ENCODE measurements at regions of chr18 and their contacts with region 1.

Region 1: DNA sequence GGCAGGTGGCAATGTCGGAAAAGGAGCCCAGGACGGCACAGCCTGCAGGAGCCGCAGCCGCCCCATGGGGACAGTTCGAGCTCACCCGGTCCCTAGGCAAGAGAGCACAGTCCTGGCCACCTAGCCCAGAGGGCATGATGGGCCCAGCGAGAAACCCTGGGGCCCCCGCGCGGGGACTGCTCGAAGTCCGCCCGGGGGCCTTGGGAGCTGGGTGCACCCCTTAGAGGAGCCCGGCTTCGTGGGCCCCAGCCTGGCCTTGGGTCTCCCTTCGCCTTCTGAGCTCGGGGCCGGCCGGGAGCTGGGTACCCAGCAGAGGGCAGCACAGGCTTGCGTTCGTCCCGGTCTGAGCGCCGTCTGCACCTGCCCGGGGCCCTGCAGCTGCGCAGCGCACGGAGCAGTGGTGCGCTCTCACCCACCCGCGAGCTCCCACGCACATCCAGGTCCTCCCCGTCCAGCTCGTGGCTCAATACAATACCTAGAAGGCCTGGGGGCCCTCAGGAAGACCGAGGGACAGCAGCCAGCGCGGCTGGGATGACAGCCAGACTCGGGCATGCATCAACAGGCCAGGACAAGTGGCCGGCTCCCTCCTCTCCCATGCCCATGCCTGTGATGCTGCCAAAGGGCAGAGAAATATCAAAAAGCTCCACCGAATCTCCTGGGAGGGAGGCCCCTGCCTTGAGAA is 96.2 kb upstream of the ZNF532 start:
- DNase-seq: peak; percentile 77
- ATAC-seq: peak; percentile 96
- H3K4me3 Mint-ChIP-seq: no peak overlapping the region
- H3K27ac Mint-ChIP-seq: no peak overlapping the region
- H3K4me1 Mint-ChIP-seq: peaks cover 13% of the 10 kb centered on the region
- H3K27me3 Mint-ChIP-seq: peaks cover 44% of the 10 kb centered on the region

Region 2: DNA sequence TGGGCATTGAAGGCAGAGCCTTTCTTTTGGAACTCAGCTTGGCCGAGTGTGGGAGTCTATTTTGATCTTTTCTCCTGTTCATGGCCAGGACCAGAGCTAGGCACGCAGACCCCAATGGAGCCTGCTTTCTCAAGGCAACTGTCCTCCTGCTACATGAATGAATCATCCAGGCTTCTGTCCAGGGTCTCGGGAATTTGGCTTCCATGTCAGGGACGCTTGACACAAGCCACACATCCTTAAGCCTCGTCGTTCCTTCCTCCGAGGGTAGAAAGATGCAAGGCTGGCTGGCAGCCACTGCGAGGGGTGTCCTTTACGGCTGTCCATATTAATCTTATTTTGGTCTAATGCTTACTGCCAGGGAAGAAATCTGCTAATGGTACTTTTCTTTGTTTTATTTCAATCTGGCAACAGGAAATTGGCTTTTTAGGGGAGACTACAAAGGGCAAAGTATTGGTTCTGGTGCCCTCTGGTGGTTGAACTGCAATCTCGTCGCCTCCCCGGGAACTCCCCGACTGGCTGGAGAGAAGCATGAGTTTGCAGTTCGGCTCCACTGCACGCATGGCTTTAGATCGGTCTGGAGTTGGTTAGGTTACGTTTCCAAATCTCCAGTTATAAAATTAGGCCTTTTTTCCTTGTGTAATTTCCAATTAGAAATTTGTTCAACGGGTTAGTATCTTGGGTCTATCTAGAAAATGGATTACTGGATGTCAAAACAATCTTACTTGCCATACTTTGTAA is 274.7 kb before region 1 on chr18:
- CTCF ChIA-PET with region 1: interaction called, 25 read pairs
- POLR2A ChIA-PET with region 1: no interaction called
- DNase-seq: peak; percentile 81
- ATAC-seq: peak; percentile 92
- H3K4me3 Mint-ChIP-seq: no peak overlapping the region
- H3K27ac Mint-ChIP-seq: no peak overlapping the region
- H3K4me1 Mint-ChIP-seq: peaks cover 9% of the 10 kb centered on the region
- H3K27me3 Mint-ChIP-seq: peaks cover 36% of the 10 kb centered on the region

Region 3: DNA sequence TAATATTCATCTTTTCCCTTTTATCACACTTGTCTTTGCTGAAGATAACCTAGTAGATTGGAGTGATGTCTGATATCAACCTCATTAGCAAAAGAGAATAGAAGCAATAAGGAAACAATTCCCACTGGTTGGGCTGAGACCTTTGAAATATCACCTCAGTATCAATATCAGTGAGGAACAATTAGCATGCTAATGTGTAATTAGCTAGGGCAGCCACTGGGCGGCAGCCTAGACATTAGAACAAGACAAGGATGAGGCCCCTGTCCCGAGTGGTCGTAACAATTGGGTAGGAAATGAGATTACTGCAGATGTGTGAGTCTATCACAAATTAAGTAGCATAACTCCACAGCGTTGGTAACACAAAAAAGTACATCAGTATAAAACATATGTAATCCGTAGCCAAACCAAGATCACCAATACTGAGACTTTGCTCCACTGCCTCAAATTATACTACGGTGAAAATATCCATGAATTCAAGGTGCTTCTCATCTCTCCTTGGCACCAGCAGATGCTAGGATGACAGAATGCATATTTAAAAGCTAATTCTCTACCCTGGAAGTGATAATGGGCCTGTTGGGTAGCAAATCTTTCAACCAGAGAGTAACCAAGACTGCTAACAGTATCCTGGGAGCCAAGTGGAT is 238.6 kb before region 1 on chr18:
- CTCF ChIA-PET with region 1: interaction called, 415 read pairs
- POLR2A ChIA-PET with region 1: interaction called, 5 read pairs
- DNase-seq: peak; percentile 76
- ATAC-seq: no peak
- H3K4me3 Mint-ChIP-seq: no peak overlapping the region
- H3K27ac Mint-ChIP-seq: no peak overlapping the region
- H3K4me1 Mint-ChIP-seq: peaks cover 10% of the 10 kb centered on the region
- H3K27me3 Mint-ChIP-seq: peaks cover 21% of the 10 kb centered on the region

Region 4: GRCh38 chr18:58657494-58657893 is 110.9 kb before region 1 on chr18:
- CTCF ChIA-PET with region 1: interaction called, 12 read pairs
- POLR2A ChIA-PET with region 1: interaction called, 3 read pairs
- DNase-seq: no peak
- ATAC-seq: no peak
- H3K4me3 Mint-ChIP-seq: peak overlapping the region; percentile 70
- H3K27ac Mint-ChIP-seq: peak overlapping the region; percentile 96
- H3K4me1 Mint-ChIP-seq: peaks cover 67% of the 10 kb centered on the region
- H3K27me3 Mint-ChIP-seq: no peaks in the 10 kb centered on the region

Region 5: DNA sequence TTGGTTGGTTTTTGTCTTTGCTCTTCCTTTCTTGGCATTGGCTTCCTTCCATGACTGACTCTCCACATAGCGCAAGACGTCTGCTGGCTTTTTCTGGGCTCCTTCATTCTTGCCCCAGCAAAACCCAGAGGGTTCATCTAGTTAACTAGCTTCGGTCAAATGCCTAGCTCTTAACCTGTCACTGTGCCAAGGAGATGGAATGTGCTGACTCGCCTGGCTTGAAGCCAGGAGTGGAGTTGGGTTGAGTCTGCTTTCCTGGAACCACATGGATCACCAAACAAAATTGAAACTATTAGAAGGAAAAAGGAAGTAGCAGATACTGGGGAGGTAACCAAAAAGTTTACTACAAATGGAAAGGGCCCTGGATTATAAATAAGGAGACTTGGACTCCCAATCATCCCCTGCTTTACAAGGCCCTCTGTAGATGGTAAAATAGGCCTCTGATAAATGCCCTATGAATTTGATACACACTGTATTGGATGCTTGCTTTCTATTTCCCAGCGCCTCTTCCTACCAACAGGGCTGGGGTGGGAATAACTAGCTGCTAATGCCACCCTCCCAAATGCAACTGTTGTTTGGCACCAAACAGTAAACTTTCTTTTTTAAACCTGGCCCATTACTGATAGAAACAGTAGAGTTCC is 85.9 kb before region 1 on chr18:
- CTCF ChIA-PET with region 1: interaction called, 16 read pairs
- POLR2A ChIA-PET with region 1: no interaction called
- DNase-seq: no peak
- ATAC-seq: no peak
- H3K4me3 Mint-ChIP-seq: no peak overlapping the region
- H3K27ac Mint-ChIP-seq: no peak overlapping the region
- H3K4me1 Mint-ChIP-seq: peaks cover 40% of the 10 kb centered on the region
- H3K27me3 Mint-ChIP-seq: no peaks in the 10 kb centered on the region

Region 6: GRCh38 chr18:58748899-58749595 is 19.4 kb before region 1 on chr18:
- CTCF ChIA-PET with region 1: interaction called, 49 read pairs
- POLR2A ChIA-PET with region 1: no interaction called
- DNase-seq: no peak
- ATAC-seq: no peak
- H3K4me3 Mint-ChIP-seq: no peak overlapping the region
- H3K27ac Mint-ChIP-seq: no peak overlapping the region
- H3K4me1 Mint-ChIP-seq: peaks cover 10% of the 10 kb centered on the region
- H3K27me3 Mint-ChIP-seq: no peaks in the 10 kb centered on the region

Region 7: DNA sequence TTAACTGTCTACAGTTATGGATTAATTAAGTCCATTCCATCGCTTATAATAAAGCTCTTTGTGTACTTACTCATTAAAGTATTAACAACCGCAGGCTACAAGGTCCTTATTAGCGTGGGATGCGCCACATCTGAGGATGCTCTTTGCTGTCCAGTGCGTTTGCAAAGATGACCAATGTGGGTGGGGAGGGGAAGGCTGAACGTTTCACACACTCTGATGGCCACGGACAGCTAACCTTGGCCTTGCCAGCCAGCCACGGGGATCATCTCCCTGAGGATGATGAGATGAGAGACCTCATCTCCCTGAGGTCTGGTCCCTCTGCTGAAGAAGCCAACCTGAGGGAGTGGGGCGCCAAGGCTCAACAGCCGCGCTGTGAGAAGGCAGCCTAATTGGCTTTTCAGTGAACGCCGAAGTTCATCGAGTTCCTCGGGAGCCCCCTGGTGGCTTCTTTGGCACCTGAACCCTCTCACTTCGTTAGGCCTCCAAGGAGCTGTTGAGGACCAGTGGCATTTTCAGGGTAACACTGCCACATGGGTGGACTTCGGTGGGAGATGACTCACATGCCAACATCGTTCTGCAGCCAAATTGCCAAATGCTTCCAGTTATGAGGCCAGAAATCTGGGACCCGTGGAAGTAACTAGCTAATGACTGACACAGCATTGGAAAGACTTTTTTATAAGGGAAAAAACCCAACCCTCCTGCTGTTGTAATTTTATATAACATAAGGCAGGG is 301.9 kb after region 1 on chr18:
- CTCF ChIA-PET with region 1: interaction called, 47 read pairs
- POLR2A ChIA-PET with region 1: no interaction called
- DNase-seq: peak; percentile 83
- ATAC-seq: peak; percentile 88
- H3K4me3 Mint-ChIP-seq: no peak overlapping the region
- H3K27ac Mint-ChIP-seq: no peak overlapping the region
- H3K4me1 Mint-ChIP-seq: no peaks in the 10 kb centered on the region
- H3K27me3 Mint-ChIP-seq: peaks cover 13% of the 10 kb centered on the region